T-cell (primary cell): ENCODE measurements at regions of chr6 and their contacts with region 1.

Region 1: GRCh38 chr6:151403919-151404308 is 12.6 kb upstream of the ZBTB2 start:
- DNase-seq: no peak
- ATAC-seq: no peak
- H3K4me3 ChIP-seq: no peak overlapping the region
- H3K4me3 Mint-ChIP-seq: no peak overlapping the region
- H3K27ac ChIP-seq: no peak overlapping the region
- H3K27ac Mint-ChIP-seq: peak overlapping the region in 1 of 2 donors; percentile 52
- H3K4me1 ChIP-seq: peaks cover 8 to 19% of the 10 kb centered on the region in 2 experiments
- H3K4me1 Mint-ChIP-seq: peaks cover 53 to 54% (median 54%) of the 10 kb centered on the region in 3 donors
- H3K27me3 ChIP-seq: no peaks in the 10 kb centered on the region
- H3K27me3 Mint-ChIP-seq: no peaks in the 10 kb centered on the region

Region 2: GRCh38 chr6:151082079-151082478 is 321.8 kb before region 1 on chr6:
- CTCF ChIA-PET with region 1: no interaction called
- POLR2A ChIA-PET with region 1: no interaction called
- DNase-seq: no peak
- ATAC-seq: no peak
- H3K4me3 ChIP-seq: no peak overlapping the region
- H3K4me3 Mint-ChIP-seq: no peak overlapping the region
- H3K27ac ChIP-seq: no peak overlapping the region
- H3K27ac Mint-ChIP-seq: no peak overlapping the region
- H3K4me1 ChIP-seq: no peaks in the 10 kb centered on the region
- H3K4me1 Mint-ChIP-seq: no peaks in the 10 kb centered on the region
- H3K27me3 ChIP-seq: no peaks in the 10 kb centered on the region
- H3K27me3 Mint-ChIP-seq: no peaks in the 10 kb centered on the region

Region 3: GRCh38 chr6:151390276-151391032 is 13.5 kb before region 1 on chr6:
- CTCF ChIA-PET with region 1: interaction called, 4 to 14 read pairs
- POLR2A ChIA-PET with region 1: interaction called in 1 of 2 experiments, 10 read pairs
- DNase-seq: peak; percentile 96 to 100 (median 98)
- ATAC-seq: peak; percentile 79 to 83 (median 80)
- H3K4me3 ChIP-seq: peak overlapping the region in 1 of 2 donors; percentile 88
- H3K4me3 Mint-ChIP-seq: peak overlapping the region; percentile 69 to 92 (median 73)
- H3K27ac ChIP-seq: peak overlapping the region; percentile 81
- H3K27ac Mint-ChIP-seq: peak overlapping the region; percentile 59 to 68
- H3K4me1 ChIP-seq: peaks cover 35 to 40% of the 10 kb centered on the region in 2 experiments
- H3K4me1 Mint-ChIP-seq: peaks cover 54 to 68% (median 63%) of the 10 kb centered on the region in 3 donors
- H3K27me3 ChIP-seq: no peaks in the 10 kb centered on the region
- H3K27me3 Mint-ChIP-seq: no peaks in the 10 kb centered on the region